Endothelial cell of umbilical vein (primary cell): ENCODE measurements at regions of chr3 and their contacts with region 1.

Region 1: DNA sequence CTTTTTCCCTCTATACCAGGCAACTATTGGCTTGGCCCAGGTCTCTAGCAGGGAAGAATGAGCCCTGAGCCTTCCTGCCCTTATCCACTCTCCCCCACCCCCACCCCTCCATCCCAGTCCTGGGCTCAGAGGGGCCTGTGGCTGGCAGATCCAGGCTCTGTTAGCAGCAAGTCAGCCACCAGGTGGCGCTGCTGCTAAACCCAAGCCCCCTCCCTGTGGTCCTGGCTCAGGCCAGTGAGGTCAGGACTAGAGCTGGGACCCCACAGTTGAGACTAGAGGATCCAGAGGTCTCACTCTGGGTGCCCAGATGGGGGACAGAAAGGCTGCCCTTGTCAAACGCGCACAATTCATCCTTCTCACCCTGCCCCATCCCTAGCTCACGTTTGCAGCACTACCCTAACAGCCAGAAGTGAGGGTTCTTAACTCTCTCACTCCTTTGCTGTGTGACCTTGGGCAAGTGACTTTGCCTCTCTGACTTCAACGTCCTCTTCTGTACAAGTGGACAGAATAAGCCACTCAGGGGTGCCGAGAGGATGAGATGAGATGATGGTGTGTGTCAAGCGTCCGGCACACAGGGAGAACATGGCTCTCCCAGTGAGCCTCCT is 46.8 kb upstream of the SLC6A1 start:
- DNase-seq: peak; percentile 43
- H3K4me3 ChIP-seq: no peak overlapping the region
- H3K27ac ChIP-seq: no peak overlapping the region
- H3K4me1 ChIP-seq: no peaks in the 10 kb centered on the region
- H3K27me3 ChIP-seq: no peaks in the 10 kb centered on the region
- CTCF ChIP-seq: peak; percentile 71 to 91
- POLR2A ChIP-seq: no peak

Region 2: GRCh38 chr3:10933805-10934481 is 11.8 kb before region 1 on chr3:
- CTCF ChIA-PET with region 1: interaction called, 9 read pairs
- POLR2A ChIA-PET with region 1: no interaction called
- dilution Hi-C with region 1: no loop called
- intact Hi-C with region 1: loop called (anchors 1 kb)
- DNase-seq: no peak
- H3K4me3 ChIP-seq: no peak overlapping the region
- H3K27ac ChIP-seq: no peak overlapping the region
- H3K4me1 ChIP-seq: peaks cover 9% of the 10 kb centered on the region
- H3K27me3 ChIP-seq: no peaks in the 10 kb centered on the region
- CTCF ChIP-seq: no peak
- POLR2A ChIP-seq: no peak

Region 3: DNA sequence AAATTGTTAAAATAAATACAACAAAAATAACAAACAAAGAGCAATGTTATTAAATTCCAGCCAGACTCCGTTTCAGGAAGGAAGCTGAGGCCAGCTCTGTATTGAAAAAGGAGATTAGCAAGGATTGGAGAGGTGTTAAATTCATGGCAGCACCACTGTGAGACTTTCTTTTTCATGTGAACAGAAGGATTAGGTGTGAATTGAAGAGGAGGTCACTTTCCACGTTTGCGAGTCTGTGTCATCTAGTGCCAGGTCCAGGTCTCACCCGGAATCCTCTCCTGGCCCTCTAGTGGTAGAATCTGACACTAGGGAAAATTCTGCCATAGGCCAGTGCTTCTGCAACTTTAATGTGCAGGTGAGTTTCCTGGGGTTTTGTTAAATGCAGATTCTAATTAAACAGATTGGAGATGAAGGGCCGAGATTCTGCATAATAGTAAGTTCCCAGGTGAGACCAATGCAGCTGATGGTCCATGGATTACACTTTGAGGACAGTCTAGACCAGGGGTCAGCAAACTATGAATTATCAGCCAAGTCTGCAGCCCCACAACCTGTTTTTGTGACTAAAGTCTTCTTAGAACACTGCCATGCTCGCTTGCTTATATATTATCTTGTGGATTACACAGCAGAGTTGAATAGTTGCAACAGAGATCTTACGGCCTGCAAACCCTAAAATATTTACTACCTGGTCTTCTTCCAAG is 37.6 kb after region 1 on chr3:
- CTCF ChIA-PET with region 1: interaction called, 6 read pairs
- POLR2A ChIA-PET with region 1: no interaction called
- dilution Hi-C with region 1: no loop called
- intact Hi-C with region 1: loop called (anchors 1 kb)
- DNase-seq: peak; percentile 53
- H3K4me3 ChIP-seq: no peak overlapping the region
- H3K27ac ChIP-seq: no peak overlapping the region
- H3K4me1 ChIP-seq: peaks cover 3% of the 10 kb centered on the region
- H3K27me3 ChIP-seq: peaks cover 4 to 15% of the 10 kb centered on the region in 2 experiments
- CTCF ChIP-seq: peak; percentile 69 to 74
- POLR2A ChIP-seq: no peak

Region 4: DNA sequence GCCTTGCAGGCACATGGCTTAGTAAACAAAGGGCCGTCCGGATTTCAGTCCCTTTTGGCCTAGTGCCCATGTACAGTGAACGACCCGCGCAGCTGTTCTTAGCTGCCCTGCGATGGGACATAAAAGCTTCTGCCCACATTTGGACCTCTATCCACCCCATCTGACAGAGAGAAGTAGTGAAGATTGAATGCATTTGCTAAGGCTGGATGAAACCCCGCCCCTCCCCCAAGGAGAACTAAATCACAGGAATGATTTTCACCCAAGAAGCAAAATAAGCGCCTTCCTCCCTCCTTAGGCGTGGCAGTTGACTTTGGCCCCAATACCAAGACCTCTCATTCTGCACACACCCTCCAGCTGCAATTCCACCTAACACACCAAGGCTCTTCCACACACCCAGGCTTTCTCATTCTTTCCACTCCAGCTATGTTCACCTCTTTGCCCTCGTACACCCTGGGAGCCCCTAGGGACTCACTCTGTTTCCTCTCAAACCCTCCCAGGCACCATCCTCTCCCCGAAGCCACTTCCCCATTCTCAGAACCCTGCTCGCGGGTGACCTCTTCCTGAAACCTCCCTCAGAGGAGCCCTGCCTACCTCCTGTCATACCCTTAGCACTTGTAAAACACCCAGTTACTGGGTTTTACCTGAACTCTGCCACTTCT is 194.4 kb after region 1 on chr3:
- CTCF ChIA-PET with region 1: no interaction called
- POLR2A ChIA-PET with region 1: no interaction called
- dilution Hi-C with region 1: no loop called
- intact Hi-C with region 1: no loop called
- DNase-seq: no peak
- H3K4me3 ChIP-seq: no peak overlapping the region
- H3K27ac ChIP-seq: no peak overlapping the region
- H3K4me1 ChIP-seq: peaks cover 9% of the 10 kb centered on the region
- H3K27me3 ChIP-seq: no peaks in the 10 kb centered on the region
- CTCF ChIP-seq: no peak
- POLR2A ChIP-seq: no peak